ENCODE measurements at regions of chr1 and their contacts with region 1.

Region 1: DNA sequence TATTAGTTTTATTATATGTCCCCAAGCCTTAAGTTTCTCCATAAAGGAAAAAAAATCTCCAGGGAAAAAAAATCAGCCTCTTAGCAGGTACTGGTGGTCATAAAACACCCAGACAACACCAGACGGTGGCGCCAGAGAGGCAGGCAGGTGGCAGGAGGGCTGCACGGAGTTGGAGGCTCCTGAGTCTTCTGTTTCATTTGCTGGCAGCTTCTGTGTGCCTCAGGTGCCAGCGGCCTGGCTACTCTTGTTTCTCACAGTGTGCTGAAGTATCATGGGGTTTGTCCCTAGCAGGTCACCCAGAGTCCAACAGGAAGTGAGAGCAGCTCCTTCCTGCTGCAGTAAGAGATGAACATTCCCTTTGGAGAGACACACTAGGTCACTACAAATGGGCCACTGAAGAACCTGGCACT is 123.3 kb upstream of the GADD45A start:
- DNase-seq: peak; percentile 65
- H3K4me3 ChIP-seq: no peak overlapping the region
- H3K27ac ChIP-seq: no peak overlapping the region
- H3K27me3 ChIP-seq: no peaks in the 10 kb centered on the region
- CTCF ChIP-seq: peak; percentile 96

Region 2: DNA sequence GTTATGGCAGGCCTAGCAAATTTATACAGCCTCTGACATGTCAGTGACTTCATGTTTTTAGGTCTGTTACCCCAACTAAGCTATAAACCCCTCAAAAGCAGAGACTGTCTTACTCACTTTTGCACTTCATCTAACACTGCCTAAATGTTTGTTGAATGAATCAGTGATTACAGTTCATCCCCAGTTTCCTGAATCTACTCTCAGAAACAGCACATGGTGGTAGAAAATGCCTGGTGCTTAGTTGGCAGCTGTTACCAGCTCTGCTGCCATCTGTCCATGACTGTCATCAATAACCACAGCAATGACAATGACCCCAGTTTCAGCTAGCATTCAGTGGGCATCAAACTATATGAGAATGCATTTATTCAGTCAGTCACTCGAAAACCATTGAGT is 21.0 kb before region 1 on chr1:
- CTCF ChIA-PET with region 1: interaction called, 19 read pairs
- POLR2A ChIA-PET with region 1: no interaction called
- DNase-seq: no peak
- H3K4me3 ChIP-seq: no peak overlapping the region
- H3K27ac ChIP-seq: no peak overlapping the region
- H3K27me3 ChIP-seq: no peaks in the 10 kb centered on the region
- CTCF ChIP-seq: no peak

Region 3: DNA sequence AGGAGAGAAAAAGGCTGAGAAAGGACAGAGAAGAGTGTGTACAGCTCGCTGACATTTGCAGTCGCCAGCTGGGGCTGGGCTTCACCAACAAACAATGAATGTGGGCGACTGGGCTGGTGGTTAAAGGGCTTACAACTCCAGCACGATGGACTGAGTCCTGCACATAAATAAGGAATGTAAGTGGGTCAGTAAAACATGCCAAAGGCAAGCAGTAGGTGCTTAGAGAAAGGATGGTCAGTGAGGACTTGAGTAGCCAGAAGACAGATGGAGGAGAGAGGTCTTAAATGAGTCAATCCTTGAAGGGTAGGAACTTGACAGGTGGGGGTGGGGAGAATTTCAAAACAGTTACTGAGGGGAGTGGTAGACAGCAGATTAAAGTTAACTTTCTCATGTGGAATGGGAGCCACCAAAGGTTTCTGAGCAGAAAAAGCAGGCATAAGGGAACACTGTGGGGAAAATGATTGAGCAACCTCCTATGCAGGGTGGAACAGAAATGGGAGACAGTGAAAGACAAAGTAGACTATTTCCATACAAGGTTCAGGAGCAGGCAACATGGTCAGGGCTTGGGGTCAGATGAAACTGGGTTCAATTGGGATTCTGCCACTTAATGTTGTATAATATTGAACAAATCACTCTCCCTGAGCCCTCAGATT is 160.7 kb after region 1 on chr1:
- CTCF ChIA-PET with region 1: interaction called, 6 read pairs
- POLR2A ChIA-PET with region 1: interaction called, 19 read pairs
- DNase-seq: no peak
- H3K4me3 ChIP-seq: no peak overlapping the region
- H3K27ac ChIP-seq: no peak overlapping the region
- H3K27me3 ChIP-seq: no peaks in the 10 kb centered on the region
- CTCF ChIP-seq: no peak

Measured in AG04450 (cell line).